ENCODE measurements at regions of chr5 and their contacts with region 1.

Region 1: DNA sequence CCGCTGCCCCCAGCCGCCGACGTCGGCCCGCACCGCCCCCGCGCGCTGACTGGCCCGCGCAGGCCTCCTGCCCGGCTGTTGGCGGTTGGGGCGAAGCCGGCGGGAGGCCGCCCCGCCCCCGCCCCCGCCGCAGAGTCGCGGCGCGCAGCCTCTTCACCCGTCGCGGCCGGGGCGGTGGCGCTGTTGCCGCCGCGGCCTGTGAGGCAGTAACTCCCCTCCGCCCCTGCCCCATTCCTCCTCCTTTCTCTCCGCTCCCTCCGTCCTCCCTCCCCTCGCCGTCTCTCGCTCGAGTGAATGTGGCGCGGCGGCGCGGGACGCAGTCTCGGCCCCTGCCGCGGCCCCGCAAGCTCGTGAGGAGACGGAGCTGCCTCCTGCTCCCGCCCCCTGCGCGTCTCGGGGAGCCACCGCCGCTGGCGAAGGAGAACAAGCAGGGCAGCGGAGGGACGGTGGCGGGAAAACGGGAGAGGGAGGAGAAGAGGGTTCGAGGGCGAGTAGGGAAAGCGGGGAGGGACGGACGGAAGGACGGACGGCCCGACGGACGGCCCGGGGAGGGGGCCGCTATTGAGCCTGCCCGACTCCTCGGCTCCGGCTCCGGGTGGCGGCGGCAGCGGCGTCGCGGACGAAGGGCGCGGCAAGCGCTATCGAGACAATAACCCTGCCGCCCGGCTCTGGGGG is 637 bp upstream of the ERBIN start:
- H3K4me3 Mint-ChIP-seq: peak overlapping the region; percentile 99
- H3K27ac Mint-ChIP-seq: peak overlapping the region; percentile 100
- H3K4me1 Mint-ChIP-seq: peaks cover 30% of the 10 kb centered on the region
- H3K27me3 Mint-ChIP-seq: peaks cover 9% of the 10 kb centered on the region

Region 2: GRCh38 chr5:65721720-65722574 is 203.8 kb before region 1 on chr5 and contains the starts of genes NLN and SGTB:
- intact Hi-C with region 1: loop called (anchors 2 kb)
- H3K4me3 Mint-ChIP-seq: peak within 1 kb of the TSS; percentile 94
- H3K27ac Mint-ChIP-seq: peak within 1 kb of the TSS; percentile 97
- H3K4me1 Mint-ChIP-seq: peaks cover 19% of the 10 kb centered on the region
- H3K27me3 Mint-ChIP-seq: no peaks in the 10 kb centered on the region

Region 3: DNA sequence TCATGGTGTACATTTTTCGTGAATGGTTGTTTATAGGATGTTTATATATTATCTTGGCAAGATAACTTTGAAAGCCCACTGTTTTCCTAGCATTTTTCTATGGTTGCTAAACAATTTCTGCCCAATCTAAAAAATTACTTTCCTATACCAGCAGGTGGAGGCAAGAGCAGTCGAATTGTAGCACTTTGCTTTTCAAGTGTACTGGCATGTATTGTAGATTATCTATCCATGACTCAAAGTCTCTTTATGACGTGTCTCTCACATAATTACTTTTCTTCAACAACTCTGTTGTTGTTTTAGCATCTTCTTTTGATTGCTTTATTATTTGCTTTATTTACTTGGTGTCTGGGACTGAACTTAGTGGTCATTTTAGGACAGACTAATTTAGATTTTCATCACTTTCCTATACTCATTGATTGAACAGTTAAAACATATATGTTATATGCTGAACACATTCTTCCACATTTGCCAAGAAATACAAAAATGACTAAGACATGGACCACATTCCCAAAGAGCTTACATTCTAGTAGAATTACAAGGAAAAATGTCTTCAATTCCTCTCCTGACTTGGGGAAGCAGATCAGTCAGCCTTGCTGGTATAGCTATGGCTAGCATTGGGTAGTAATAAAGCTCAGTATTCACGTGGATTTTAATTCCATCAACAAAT is 183.0 kb before region 1 on chr5:
- intact Hi-C with region 1: loop called (anchors 5 kb)
- H3K4me3 Mint-ChIP-seq: no peak overlapping the region
- H3K27ac Mint-ChIP-seq: no peak overlapping the region
- H3K4me1 Mint-ChIP-seq: peaks cover 34% of the 10 kb centered on the region
- H3K27me3 Mint-ChIP-seq: no peaks in the 10 kb centered on the region

Region 4: DNA sequence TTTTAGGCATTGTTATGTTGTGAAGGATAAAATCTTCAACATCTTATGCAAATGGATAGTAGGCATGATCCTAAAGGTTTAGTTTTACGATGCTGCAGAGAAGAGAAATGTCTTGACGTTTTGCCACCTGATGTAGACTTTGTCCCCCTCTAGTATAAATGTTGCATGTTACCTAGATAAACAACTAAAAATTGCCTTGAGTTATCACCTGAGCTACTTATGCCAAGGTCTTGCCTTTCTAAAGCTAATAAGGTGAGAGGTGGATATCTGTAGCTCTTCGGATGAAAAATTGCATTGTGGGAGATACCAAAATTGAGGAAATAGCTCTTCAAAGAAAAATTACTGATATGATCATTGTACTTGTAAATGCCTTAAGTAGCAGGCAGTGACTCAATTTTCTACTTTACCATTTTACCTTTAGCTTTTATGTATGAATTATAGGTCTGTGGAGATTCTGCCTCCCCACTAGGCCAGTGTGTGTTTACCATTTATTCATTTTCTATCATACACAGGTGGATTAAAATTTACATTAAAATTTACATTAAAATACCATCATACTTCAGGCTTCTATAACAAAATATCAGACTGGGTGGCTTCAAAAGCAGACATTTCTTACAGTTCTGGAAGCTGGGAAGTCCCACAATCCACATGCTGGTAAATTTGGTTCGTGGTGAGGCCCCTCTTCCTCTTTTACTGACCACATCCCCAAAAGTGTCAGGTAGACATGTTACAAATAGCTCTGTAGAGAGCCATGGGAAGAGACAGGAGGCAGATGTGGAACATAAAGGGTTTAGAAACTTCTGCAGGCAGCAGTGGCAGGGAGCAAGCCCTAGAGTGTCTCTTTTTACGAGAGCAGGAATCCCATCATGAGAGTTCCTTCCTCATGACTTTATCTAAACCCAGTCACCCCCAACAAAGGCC is 100.1 kb before region 1 on chr5:
- intact Hi-C with region 1: loop called (anchors 10 kb)
- H3K4me3 Mint-ChIP-seq: no peak overlapping the region
- H3K27ac Mint-ChIP-seq: no peak overlapping the region
- H3K4me1 Mint-ChIP-seq: peaks cover 26% of the 10 kb centered on the region
- H3K27me3 Mint-ChIP-seq: no peaks in the 10 kb centered on the region

Region 5: GRCh38 chr5:66080664-66081063 is 154.9 kb after region 1 on chr5:
- intact Hi-C with region 1: no loop called
- H3K4me3 Mint-ChIP-seq: no peak overlapping the region
- H3K27ac Mint-ChIP-seq: no peak overlapping the region
- H3K4me1 Mint-ChIP-seq: no peaks in the 10 kb centered on the region
- H3K27me3 Mint-ChIP-seq: no peaks in the 10 kb centered on the region

Region 6: DNA sequence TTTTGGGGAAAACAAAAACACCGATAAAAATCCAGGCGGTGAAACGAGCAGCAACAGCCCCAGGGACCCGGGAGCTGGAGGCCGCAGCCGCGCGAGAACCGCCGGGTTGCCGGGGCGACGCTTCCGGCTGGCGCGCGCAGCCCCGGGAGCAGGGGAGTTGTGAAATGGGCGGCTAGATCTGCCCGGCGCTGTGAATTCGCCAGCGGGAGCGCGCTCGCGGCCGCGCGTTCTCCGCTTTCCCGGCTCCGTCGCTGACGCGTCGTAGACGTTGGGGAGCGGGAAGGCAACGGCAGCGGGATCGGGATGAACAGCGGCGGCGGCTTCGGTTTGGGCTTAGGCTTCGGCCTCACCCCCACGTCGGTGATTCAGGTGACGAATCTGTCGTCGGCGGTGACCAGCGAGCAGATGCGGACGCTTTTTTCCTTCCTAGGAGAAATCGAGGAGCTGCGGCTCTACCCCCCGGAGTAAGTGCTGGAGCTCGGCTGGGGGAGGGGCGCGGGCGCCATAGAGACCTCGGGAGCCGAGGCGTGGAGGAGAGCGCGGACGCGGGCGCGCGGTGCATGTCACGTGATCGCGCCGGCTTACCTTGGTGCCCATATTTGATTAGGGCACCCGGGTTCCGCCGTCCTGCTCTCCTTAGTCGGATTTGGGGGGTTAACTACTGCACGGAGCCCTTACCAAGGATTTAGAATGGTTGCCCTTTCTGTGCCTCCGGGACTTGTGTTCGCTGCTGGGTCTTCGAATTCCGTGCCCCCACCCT is 218.5 kb after region 1 on chr5 and contains the start of gene SREK1:
- intact Hi-C with region 1: loop called (anchors 5 kb)
- H3K4me3 Mint-ChIP-seq: peak within 1 kb of the TSS; percentile 89
- H3K27ac Mint-ChIP-seq: peak within 1 kb of the TSS; percentile 99
- H3K4me1 Mint-ChIP-seq: peaks cover 9% of the 10 kb centered on the region
- H3K27me3 Mint-ChIP-seq: no peaks in the 10 kb centered on the region